Right lobe of liver (tissue), 6 donors: ENCODE measurements at regions of chr5 and their contacts with region 1.

Region 1: DNA sequence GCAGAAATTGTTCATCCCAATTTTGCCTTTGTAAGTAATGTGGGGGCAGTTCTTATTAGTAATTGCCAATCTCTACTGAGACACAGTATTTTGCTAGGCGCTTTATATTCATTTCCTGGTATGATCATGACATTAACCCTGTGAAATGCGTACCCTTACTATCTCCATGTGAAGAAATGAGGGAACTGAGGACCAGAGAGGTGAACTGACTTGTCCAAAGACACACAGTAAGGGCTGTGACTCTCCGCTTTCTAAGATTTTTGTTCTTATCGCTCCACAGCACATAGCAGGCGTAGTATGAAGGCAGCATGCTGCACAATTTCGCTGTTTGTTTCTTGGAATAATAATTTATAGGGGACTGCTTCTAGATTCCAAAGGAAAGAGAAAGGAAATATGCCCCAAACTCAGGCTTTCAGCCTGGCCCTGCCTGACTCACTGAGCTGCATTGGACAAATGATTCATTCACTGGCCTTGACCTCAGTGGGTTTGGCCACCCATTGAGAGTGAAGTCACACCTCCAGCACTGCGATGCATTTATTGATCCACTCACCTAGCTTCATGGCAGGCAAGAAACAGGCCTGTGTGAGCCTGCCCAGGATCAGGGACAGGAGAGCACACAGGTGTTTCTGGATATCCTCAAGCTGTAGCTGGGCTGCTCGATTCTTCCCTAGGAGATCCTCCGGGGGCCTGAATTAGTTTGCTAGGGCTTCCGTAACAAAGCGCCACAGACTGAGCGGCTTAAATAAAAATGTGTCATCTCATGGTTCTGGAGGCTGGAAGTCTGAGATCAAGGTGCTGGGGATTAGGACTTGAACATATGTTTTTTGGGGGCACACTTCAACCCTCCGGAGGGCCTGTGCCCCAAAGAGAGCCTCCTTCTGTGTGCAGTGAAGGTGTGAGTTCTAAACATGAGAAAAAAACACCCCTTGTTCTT is 7.2 kb upstream of the DUSP1 start:
- DNase-seq: peak; percentile 70 to 93 (median 84)
- ATAC-seq: peak; percentile 55 to 72 (median 64)
- H3K4me3 ChIP-seq: no peak overlapping the region
- H3K27ac ChIP-seq: peak overlapping the region; percentile 92 to 99 (median 94)
- H3K4me1 ChIP-seq: peaks cover 0 to 72% (median 35%) of the 10 kb centered on the region in 4 donors
- H3K27me3 ChIP-seq: no peaks in the 10 kb centered on the region
- CTCF ChIP-seq: no peak
- POLR2A ChIP-seq: peak; percentile 87

Region 2: GRCh38 chr5:172849606-172850453 is 71.7 kb after region 1 on chr5:
- intact Hi-C with region 1: loop called in 1 of 2 experiments (anchors 5 kb)
- DNase-seq: peak in 2 of 3 donors; percentile 69 to 72
- ATAC-seq: peak in 2 of 4 donors; percentile 1 to 39
- H3K4me3 ChIP-seq: no peak overlapping the region
- H3K27ac ChIP-seq: peak overlapping the region; percentile 31 to 92 (median 59)
- H3K4me1 ChIP-seq: peaks cover 0 to 60% (median 26%) of the 10 kb centered on the region in 4 donors
- H3K27me3 ChIP-seq: no peaks in the 10 kb centered on the region
- CTCF ChIP-seq: no peak
- POLR2A ChIP-seq: no peak